Motor neuron (in vitro differentiated cells): ENCODE measurements at regions of chr7 and their contacts with region 1.

Region 1: DNA sequence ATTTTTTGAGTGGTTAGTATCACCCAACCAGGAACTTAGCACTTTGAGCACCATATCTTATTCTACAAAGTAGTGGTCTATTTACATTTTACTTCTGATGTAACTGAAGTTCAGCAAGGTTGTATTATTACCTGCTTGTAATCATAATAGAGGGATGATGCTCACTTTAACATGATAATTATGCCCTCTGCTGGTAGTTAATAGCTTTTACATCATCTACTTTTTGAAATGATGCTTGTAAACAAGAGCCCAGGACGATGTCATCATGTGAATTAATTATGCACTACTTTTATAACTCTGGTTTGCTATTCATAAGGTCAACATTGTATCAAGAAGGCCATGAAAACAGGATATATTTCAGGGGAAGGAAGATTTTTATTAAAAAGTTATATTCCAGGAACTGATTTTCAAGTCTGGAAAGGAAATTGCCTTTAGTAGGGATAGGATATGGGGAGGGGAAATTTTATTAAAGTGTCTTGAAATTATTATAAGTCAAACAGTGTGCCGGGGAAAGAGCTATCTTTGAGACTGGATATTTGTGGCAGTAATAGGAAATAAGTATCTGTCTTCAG is 80.3 kb upstream of the SCIN start:
- ATAC-seq: peak in 5 of 8 experiments; percentile 24 to 69 (median 52)
- H3K4me3 ChIP-seq: no peak overlapping the region
- H3K27ac ChIP-seq: no peak overlapping the region
- H3K4me1 ChIP-seq: peaks cover 0 to 3% of the 10 kb centered on the region in 2 donors

Region 2: GRCh38 chr7:11726794-11727155 is 763.4 kb before region 1 on chr7:
- in situ Hi-C with region 1: no loop called
- ATAC-seq: peak in 6 of 8 experiments; percentile 22 to 92 (median 32)
- H3K4me3 ChIP-seq: no peak overlapping the region
- H3K27ac ChIP-seq: no peak overlapping the region
- H3K4me1 ChIP-seq: peaks cover 3 to 25% of the 10 kb centered on the region in 2 donors

Region 3: DNA sequence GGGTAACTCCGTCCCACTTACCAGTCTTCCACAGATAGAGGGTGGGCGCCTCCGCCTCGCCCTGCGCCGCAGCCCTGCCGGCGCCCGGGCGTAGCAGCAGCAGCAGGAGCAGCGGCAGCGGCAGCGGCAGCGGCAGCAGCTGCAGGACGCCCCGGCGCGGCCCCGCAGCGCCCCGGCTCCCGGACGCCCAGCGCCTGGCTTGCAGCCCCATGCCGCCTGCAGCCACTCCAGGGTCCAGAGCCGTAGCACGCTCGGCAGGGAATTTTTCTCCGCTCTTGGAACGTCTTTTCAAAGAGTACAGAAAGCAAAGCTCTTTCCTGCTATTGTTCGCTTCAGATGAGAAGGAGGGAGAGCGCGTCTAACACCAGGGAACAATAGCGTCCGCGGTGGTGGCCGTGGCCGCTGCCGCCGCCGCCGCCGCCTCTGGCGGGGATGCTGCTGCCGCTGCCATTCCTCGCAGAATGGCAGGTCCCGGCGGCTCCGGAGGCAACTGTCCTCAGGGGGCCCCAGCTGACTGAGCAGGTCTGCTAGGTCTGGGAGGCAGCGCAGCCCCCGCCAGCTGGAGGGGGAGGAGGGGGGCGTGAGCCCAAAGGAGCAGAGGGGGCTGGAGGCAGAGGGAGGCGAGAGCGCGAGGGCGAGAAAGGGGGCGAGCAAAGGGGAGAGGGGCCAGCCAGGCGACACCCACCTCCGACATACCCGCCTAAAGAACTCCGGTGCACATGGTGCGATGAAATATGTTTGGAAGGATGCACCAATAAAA is 658.3 kb before region 1 on chr7 and contains the start of gene THSD7A:
- in situ Hi-C with region 1: loop called in 1 of 9 experiments (anchors 25 kb)
- ATAC-seq: peak; percentile 84 to 97 (median 87)
- H3K4me3 ChIP-seq: peak within 1 kb of the TSS; percentile 45 to 70 (median 47)
- H3K27ac ChIP-seq: peak within 1 kb of the TSS; percentile 75 to 85
- H3K4me1 ChIP-seq: peaks cover 8 to 36% of the 10 kb centered on the region in 2 donors
- total RNA-seq, gene THSD7A: 1.1 to 24.7 (median 9.6) TPM

Region 4: GRCh38 chr7:12067141-12067831 is 422.9 kb before region 1 on chr7:
- in situ Hi-C with region 1: loop called in 1 of 9 experiments (anchors 25 kb)
- ATAC-seq: peak in 5 of 8 experiments; percentile 46 to 92 (median 76)
- H3K4me3 ChIP-seq: no peak overlapping the region
- H3K27ac ChIP-seq: no peak overlapping the region
- H3K4me1 ChIP-seq: no peaks in the 10 kb centered on the region

Region 5: GRCh38 chr7:12174931-12175330 is 315.3 kb before region 1 on chr7:
- in situ Hi-C with region 1: no loop called
- ATAC-seq: no peak
- H3K4me3 ChIP-seq: no peak overlapping the region
- H3K27ac ChIP-seq: no peak overlapping the region
- H3K4me1 ChIP-seq: no peaks in the 10 kb centered on the region

Region 6: GRCh38 chr7:12389089-12389700 is 101.0 kb before region 1 on chr7:
- in situ Hi-C with region 1: loop called in 1 of 9 experiments (anchors 25 kb)
- ATAC-seq: peak in 5 of 8 experiments; percentile 46 to 86 (median 78)
- H3K4me3 ChIP-seq: no peak overlapping the region
- H3K27ac ChIP-seq: no peak overlapping the region
- H3K4me1 ChIP-seq: peaks cover 13 to 30% of the 10 kb centered on the region in 2 donors

Region 7: DNA sequence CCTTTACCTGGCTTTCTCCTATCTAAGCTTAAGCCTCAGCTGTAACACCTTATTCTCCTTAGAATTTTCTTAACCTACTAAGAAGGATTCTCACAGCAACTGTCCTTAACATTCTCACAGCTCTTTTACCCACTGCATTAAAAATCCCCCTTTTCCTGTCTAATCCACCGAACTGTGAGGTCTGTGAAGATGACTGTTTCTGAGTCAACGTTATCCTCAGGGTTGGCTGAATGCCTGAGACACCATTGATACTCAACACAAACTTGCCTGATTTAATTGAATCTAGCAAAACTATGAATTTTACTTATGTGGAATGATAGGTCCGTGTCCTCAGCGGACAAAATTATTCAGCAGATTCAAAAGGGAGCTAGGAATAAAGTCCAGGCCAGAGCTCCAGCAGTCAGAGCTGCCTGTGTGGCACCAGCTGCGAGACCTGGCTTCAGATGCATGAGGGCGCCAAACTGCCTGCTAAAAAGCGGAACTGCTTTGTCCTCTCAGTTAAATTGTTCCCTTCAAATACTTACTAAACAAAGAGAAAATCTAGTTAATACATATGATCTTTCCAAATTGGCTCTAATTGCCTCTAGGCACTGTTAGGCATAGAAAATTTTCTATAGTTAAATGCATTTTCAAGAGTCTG is 53.2 kb before region 1 on chr7:
- in situ Hi-C with region 1: loop called in 1 of 9 experiments (anchors 10 kb)
- ATAC-seq: peak in 2 of 8 experiments; percentile 16 to 61
- H3K4me3 ChIP-seq: no peak overlapping the region
- H3K27ac ChIP-seq: no peak overlapping the region
- H3K4me1 ChIP-seq: no peaks in the 10 kb centered on the region

Region 8: GRCh38 chr7:12715372-12716133 is 225.3 kb after region 1 on chr7:
- in situ Hi-C with region 1: no loop called
- ATAC-seq: peak; percentile 82 to 93 (median 92)
- H3K4me3 ChIP-seq: peak overlapping the region; percentile 14 to 36 (median 25)
- H3K27ac ChIP-seq: peak overlapping the region; percentile 66 to 85
- H3K4me1 ChIP-seq: peaks cover 28 to 44% of the 10 kb centered on the region in 2 donors